Activated CD8-positive, alpha-beta T cell treated with anti-CD3 and anti-CD28 coated beads, Interleukin-2, amount 10 ng/mL, durations not matched to agents 7 days and 5 days (primary cell): ENCODE measurements at regions of chr16 and their contacts with region 1.

Region 1: DNA sequence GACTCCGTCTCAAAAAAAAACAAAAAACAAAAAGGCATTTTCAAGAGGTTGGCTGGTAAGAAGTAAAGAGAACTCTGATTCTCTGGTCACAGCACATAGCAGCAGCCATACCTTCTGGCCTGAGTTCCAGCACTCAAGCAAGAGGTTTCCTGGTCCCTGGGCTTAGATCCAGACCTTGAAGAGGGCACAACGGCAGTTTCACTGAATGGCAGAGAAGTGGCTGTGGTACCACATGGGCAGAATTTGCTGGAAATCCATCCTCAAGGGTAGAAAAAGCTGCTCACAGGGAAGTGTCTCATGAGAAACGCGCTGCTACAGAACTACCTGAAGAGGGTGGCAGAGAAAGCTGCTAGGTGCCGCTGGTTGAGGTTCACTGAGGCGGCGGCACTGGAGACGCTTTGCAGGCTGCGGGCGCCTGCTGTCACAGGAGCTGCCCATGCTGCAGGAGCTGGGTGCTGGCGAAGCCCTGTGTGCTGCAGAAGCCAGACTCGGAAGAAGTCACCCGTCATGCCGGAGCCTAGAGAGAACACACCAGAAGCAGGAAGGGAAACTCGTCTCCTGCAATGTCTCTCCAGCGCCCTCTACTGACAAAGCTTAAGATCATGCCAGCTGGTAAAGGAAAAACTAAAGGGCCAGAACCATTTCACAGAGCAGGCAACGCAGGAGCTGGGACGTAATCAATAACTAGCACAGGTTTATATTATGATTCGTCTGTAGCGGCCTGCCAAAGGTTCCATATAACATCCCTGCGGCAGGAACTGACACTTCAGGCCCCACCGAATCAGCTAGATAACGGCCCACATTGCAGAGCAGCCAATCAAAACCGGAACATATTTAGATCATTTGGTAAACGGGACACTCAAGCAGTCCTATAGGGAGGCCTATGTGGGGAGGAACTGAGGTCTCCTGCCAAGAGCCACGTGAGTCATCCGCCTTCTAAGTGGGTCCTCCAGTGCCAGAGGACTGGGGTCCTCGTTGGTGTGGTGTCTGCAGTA is 5.4 kb upstream of the ZNF213 start:
- DNase-seq: peak; percentile 89
- ATAC-seq: peak; percentile 69
- H3K4me3 Mint-ChIP-seq: peak overlapping the region; percentile 94
- H3K27ac Mint-ChIP-seq: peak overlapping the region; percentile 90
- H3K4me1 Mint-ChIP-seq: peaks cover 67% of the 10 kb centered on the region
- H3K27me3 Mint-ChIP-seq: no peaks in the 10 kb centered on the region

Region 2: GRCh38 chr16:3045357-3045728 is 84.1 kb before region 1 on chr16:
- CTCF ChIA-PET with region 1: interaction called, 17 read pairs
- POLR2A ChIA-PET with region 1: interaction called, 9 read pairs
- DNase-seq: peak; percentile 73
- ATAC-seq: peak; percentile 56
- H3K4me3 Mint-ChIP-seq: peak overlapping the region; percentile 83
- H3K27ac Mint-ChIP-seq: peak overlapping the region; percentile 78
- H3K4me1 Mint-ChIP-seq: peaks cover 44% of the 10 kb centered on the region
- H3K27me3 Mint-ChIP-seq: peaks cover 33% of the 10 kb centered on the region

Region 3: GRCh38 chr16:3074860-3075522 is 54.4 kb before region 1 on chr16:
- CTCF ChIA-PET with region 1: interaction called, 72 read pairs
- POLR2A ChIA-PET with region 1: interaction called, 18 read pairs
- DNase-seq: peak; percentile 95
- ATAC-seq: peak; percentile 85
- H3K4me3 Mint-ChIP-seq: peak overlapping the region; percentile 73
- H3K27ac Mint-ChIP-seq: peak overlapping the region; percentile 94
- H3K4me1 Mint-ChIP-seq: peaks cover 92% of the 10 kb centered on the region
- H3K27me3 Mint-ChIP-seq: no peaks in the 10 kb centered on the region

Region 4: GRCh38 chr16:3118204-3118806 is 11.1 kb before region 1 on chr16:
- CTCF ChIA-PET with region 1: interaction called, 16 read pairs
- POLR2A ChIA-PET with region 1: interaction called, 4 read pairs
- DNase-seq: no peak
- ATAC-seq: no peak
- H3K4me3 Mint-ChIP-seq: no peak overlapping the region
- H3K27ac Mint-ChIP-seq: no peak overlapping the region
- H3K4me1 Mint-ChIP-seq: peaks cover 9% of the 10 kb centered on the region
- H3K27me3 Mint-ChIP-seq: peaks cover 7% of the 10 kb centered on the region

Region 5: DNA sequence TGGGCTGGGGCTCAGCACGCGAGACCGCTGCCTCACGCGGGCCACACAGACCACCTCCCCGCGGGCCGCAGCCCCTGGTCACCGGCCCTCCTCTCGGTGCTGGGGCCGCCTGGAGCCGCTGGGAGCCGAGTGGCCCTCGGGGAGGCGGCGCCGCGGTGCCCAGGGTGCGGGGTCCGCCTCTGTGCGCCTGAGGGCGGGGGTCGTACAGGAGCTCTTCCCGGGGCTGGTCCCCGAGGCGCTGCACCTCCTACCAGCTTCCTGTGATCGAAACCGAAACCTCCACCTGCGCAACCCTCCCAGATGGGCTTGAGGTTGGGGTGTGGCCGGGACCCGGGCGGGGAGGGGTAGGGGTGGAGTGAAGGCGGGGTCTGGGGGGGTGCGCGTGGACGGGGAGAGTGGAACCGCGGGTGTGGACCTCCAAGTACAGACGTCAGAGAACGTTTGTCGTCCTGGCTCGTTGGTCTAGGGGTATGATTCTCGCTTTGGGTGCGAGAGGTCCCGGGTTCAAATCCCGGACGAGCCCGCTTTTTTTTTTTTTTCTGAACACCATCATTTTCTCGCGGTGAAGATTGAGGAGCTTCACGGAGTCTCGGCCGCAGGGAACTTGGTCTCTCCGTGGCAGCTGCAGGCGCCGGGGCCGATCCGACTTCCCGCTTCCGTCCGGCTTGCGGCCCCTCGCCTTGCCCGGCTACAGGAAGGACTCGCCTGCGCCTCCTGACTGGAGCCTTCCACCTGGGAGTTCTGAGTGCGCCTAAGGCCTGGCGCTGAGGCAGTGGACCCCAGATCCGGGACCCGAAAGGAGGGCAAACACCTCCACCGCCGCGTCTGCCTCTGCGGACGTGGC is 29.3 kb after region 1 on chr16:
- CTCF ChIA-PET with region 1: interaction called, 13 read pairs
- POLR2A ChIA-PET with region 1: interaction called, 4 read pairs
- DNase-seq: peak; percentile 97
- ATAC-seq: peak; percentile 87
- H3K4me3 Mint-ChIP-seq: peak overlapping the region; percentile 92
- H3K27ac Mint-ChIP-seq: peak overlapping the region; percentile 89
- H3K4me1 Mint-ChIP-seq: peaks cover 52% of the 10 kb centered on the region
- H3K27me3 Mint-ChIP-seq: peaks cover 18% of the 10 kb centered on the region

Region 6: GRCh38 chr16:3173892-3174617 is 44.6 kb after region 1 on chr16:
- CTCF ChIA-PET with region 1: interaction called, 18 read pairs
- POLR2A ChIA-PET with region 1: no interaction called
- DNase-seq: no peak
- ATAC-seq: peak; percentile 10
- H3K4me3 Mint-ChIP-seq: peak overlapping the region; percentile 63
- H3K27ac Mint-ChIP-seq: peak overlapping the region; percentile 30
- H3K4me1 Mint-ChIP-seq: peaks cover 42% of the 10 kb centered on the region
- H3K27me3 Mint-ChIP-seq: peaks cover 56% of the 10 kb centered on the region

Region 7: GRCh38 chr16:3223913-3224515 is 94.6 kb after region 1 on chr16:
- CTCF ChIA-PET with region 1: no interaction called
- POLR2A ChIA-PET with region 1: no interaction called
- DNase-seq: no peak
- ATAC-seq: no peak
- H3K4me3 Mint-ChIP-seq: no peak overlapping the region
- H3K27ac Mint-ChIP-seq: no peak overlapping the region
- H3K4me1 Mint-ChIP-seq: no peaks in the 10 kb centered on the region
- H3K27me3 Mint-ChIP-seq: no peaks in the 10 kb centered on the region